ENCODE measurements at regions of chr19 and their contacts with region 1.

Region 1: DNA sequence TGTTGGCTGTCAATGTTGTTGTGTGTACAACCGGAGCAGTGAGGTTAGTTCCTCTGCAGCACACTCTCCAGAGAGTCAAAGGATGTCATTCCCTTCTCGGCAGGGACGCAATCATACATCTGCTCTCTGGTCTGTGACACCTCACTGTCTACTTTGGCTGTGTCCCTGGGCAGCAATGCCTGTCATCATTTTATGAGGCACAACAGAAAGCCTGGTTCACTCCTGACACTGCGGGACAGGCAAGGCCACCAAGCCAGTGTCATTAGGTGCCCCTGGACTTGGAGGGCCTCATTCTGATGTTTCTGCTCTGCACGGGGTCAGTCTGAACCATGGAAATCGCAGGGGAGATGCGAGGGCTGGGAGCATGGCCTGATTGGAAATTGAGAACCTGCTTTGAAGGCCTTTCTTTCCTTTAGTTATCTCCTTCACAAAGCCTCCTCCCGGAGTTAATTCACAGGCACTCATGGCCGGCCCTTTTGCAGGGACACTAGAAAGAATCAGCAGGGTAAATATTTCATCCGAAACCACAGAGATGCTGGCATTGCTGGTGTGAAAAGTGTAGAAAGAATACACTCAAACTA is 284.4 kb downstream of the ZNF536 start:
- DNase-seq: no peak
- H3K4me3 ChIP-seq: no peak overlapping the region
- H3K27ac ChIP-seq: no peak overlapping the region
- H3K4me1 ChIP-seq: no peaks in the 10 kb centered on the region
- H3K27me3 ChIP-seq: peaks cover 0 to 21% of the 10 kb centered on the region in 2 donors
- CTCF ChIP-seq: no peak
- POLR2A ChIP-seq: no peak

Region 2: DNA sequence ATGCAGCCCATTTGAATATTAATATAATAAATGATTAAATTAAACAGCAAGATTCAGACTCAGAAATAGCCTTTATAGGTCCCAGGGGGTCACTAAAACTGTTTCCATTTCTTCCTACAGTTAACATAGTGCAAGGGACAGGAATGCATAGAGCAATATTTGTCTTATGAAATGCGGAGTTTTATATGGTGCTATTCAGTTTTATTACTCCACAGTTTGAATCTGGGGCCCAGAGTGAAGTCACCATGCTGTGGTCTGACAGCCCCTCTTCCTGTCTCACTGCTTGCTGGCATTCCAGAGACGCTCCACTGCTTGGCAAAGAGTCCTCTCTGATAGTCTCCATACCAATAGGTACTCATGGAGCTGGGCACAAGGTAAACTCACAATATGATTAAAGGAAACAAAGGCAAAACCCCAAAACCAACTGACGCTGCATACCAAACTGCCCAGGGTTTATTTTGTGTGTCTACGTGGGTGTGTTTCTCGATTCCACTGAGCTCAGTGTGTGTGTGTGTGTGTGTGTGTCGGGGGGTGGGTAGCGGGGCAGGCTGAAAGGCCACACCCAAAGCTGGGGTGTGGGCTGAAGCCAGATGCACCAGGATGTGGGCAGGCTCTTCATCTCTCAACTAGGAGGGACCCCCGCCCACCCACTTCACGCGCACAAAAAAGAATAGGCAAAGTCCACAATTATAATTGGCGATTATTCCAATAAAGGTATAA is 414.7 kb after region 1 on chr19:
- intact Hi-C with region 1: loop called (anchors 5 kb)
- DNase-seq: no peak
- H3K4me3 ChIP-seq: no peak overlapping the region
- H3K27ac ChIP-seq: no peak overlapping the region
- H3K4me1 ChIP-seq: no peaks in the 10 kb centered on the region
- H3K27me3 ChIP-seq: peaks cover 0 to 12% of the 10 kb centered on the region in 2 donors
- CTCF ChIP-seq: no peak
- POLR2A ChIP-seq: no peak